WTC11 (cell line): ENCODE measurements at regions of chr16 and their contacts with region 1.

Region 1: DNA sequence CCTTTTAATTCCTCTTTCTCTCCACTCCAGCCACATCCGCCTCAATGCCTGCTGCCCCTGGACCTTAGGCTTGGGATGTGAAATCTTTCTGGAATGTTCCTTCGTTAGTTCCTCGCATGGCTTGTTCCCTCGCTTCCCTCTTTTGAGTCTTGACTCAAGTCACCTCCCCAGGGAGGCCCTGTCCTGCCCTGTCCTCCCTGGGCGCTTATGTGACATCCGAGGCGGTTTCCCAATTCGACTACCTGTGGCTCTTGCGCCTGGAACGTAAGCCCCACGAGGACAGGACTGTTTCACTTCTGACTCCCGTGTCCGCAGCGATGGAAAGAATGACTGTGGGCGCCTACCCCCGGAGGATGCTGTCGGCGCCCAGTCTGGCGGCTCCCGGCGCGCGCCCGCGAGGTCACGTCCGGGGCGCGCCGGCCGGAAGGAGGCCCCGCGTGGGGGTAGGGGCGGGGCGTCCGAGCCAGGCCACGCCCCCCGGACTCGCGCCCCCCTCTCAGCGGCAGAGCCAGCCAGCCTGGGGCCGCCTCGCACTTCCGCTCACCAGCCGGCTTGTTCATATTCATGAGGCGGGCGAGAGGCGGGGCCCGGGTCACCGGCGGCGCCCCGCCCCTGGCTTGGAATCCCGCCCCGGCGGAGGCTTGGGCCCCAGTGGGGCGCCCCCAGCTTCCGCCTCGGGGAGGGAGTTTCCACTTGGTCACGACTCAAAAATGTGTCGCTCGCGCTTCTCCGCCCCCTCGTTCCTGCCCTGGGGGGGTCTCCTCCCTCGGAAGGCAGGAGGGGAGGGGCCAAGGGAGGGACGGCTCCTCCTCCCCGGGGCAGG is 8.4 kb upstream of the GLIS2 start:
- DNase-seq: peak; percentile 94
- ATAC-seq: peak; percentile 78
- H3K4me3 Mint-ChIP-seq: peak overlapping the region; percentile 96
- H3K27ac Mint-ChIP-seq: peak overlapping the region; percentile 97
- H3K4me1 Mint-ChIP-seq: peaks cover 39% of the 10 kb centered on the region
- H3K27me3 Mint-ChIP-seq: no peaks in the 10 kb centered on the region; the same call in 1 of the 2 replicates
- CTCF ChIP-seq: no peak

Region 2: DNA sequence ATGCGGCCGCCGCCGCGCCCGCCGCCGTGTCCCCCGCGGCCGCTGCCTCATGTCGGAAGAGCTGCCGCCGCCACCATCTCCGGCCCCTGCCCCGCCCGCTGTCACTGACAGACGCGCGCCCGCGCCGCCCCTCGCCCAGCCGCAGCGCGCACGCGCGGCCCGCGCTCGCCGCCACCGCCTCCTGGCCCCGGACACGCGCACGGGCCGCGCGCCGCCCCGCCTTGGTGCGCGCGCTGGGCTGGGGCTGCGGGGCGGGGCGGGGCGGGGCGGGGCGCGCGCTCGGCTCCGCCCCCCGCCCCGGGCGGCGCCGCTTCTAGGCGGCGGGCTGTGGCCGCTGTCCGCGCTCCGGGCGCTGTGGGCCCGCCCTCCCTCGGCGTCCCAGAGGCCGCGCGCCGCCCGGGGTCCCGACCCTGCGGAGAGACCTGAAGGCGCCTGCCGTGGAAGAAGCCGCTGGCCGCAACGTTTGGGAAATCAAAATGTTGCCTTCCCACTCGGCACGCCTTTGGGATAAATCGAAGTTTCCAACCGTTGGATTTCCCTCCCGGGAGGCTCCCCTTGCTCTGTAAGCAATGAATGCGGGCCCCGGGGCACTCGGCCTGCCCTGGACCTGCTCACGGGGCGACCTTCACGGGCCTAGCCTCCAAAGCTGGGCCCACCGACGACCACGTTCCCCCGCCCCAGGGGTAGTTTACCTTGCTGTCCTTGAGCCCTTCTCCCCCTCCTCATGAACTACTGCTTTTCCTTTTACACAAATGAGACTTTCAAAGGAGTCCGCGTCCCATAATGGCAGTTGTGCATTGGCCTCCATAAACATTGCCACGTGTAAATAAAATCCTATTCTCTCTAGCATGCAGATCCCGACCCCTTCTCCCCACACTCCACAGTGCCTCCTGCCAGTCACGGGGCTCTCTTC is 190.8 kb before region 1 on chr16 and contains the start of gene ADCY9:
- CTCF ChIA-PET with region 1: no interaction called
- POLR2A ChIA-PET with region 1: no interaction called
- DNase-seq: peak; percentile 83
- ATAC-seq: peak; percentile 56
- H3K4me3 Mint-ChIP-seq: peak within 1 kb of the TSS; percentile 79
- H3K27ac Mint-ChIP-seq: no peak within 1 kb of the TSS; the same call in 1 of the 2 replicates
- H3K4me1 Mint-ChIP-seq: peaks cover 37% of the 10 kb centered on the region
- H3K27me3 Mint-ChIP-seq: peaks cover 32% of the 10 kb centered on the region
- CTCF ChIP-seq: no peak
- total RNA-seq, gene ADCY9: 9.5 to 11.5 TPM (median 10.0 TPM) in 3 replicates

Region 3: GRCh38 chr16:4293822-4294457 is 13.5 kb before region 1 on chr16:
- CTCF ChIA-PET with region 1: interaction called, 57 read pairs
- POLR2A ChIA-PET with region 1: interaction called, 10 read pairs
- DNase-seq: peak; percentile 81
- ATAC-seq: peak; percentile 91
- H3K4me3 Mint-ChIP-seq: peak overlapping the region; percentile 59
- H3K27ac Mint-ChIP-seq: peak overlapping the region; percentile 97
- H3K4me1 Mint-ChIP-seq: peaks cover 37% of the 10 kb centered on the region
- H3K27me3 Mint-ChIP-seq: no peaks in the 10 kb centered on the region
- CTCF ChIP-seq: no peak

Region 4: GRCh38 chr16:4323845-4324478 is 16.5 kb after region 1 on chr16:
- CTCF ChIA-PET with region 1: interaction called, 122 read pairs
- POLR2A ChIA-PET with region 1: interaction called, 5 read pairs
- DNase-seq: peak; percentile 68
- ATAC-seq: peak; percentile 75
- H3K4me3 Mint-ChIP-seq: no peak overlapping the region
- H3K27ac Mint-ChIP-seq: peak overlapping the region; percentile 93
- H3K4me1 Mint-ChIP-seq: peaks cover 29% of the 10 kb centered on the region
- H3K27me3 Mint-ChIP-seq: no peaks in the 10 kb centered on the region
- CTCF ChIP-seq: no peak

Region 5: DNA sequence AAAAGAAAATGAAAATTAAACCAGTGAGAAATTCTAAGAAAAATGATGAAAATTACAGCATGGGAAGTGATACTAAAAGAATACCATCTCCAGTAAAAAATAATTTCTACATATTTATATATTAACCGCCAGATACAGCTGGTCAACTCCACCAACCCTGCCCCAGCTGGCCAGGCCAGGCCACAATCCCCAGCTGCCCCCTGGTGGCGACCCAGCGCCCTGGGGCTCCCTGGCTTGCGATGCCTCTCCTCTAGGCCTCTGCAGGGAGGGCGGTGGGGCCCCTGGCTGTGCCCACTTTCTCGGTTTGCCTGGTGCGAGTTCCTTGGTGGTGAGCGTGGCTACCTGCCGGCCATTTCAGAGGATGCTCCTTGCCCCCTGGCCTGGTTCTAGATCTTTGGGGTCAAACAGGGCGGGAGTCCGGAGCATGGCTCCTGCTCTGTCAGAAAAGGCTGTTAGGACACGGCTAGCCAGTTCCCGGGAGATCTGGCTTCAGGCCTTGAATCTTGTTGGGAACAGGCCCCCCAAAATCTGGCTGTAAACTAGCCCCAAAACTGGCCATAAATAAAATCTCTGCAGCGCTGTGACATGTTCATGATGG is 22.9 kb after region 1 on chr16:
- CTCF ChIA-PET with region 1: interaction called, 122 read pairs
- POLR2A ChIA-PET with region 1: interaction called, 5 read pairs
- DNase-seq: peak; percentile 86
- ATAC-seq: peak; percentile 27
- H3K4me3 Mint-ChIP-seq: no peak overlapping the region
- H3K27ac Mint-ChIP-seq: no peak overlapping the region
- H3K4me1 Mint-ChIP-seq: peaks cover 18% of the 10 kb centered on the region
- H3K27me3 Mint-ChIP-seq: no peaks in the 10 kb centered on the region
- CTCF ChIP-seq: peak; percentile 93